Prostate gland (tissue), 2 donors: ENCODE measurements at regions of chr1 and their contacts with region 1.

Region 1: DNA sequence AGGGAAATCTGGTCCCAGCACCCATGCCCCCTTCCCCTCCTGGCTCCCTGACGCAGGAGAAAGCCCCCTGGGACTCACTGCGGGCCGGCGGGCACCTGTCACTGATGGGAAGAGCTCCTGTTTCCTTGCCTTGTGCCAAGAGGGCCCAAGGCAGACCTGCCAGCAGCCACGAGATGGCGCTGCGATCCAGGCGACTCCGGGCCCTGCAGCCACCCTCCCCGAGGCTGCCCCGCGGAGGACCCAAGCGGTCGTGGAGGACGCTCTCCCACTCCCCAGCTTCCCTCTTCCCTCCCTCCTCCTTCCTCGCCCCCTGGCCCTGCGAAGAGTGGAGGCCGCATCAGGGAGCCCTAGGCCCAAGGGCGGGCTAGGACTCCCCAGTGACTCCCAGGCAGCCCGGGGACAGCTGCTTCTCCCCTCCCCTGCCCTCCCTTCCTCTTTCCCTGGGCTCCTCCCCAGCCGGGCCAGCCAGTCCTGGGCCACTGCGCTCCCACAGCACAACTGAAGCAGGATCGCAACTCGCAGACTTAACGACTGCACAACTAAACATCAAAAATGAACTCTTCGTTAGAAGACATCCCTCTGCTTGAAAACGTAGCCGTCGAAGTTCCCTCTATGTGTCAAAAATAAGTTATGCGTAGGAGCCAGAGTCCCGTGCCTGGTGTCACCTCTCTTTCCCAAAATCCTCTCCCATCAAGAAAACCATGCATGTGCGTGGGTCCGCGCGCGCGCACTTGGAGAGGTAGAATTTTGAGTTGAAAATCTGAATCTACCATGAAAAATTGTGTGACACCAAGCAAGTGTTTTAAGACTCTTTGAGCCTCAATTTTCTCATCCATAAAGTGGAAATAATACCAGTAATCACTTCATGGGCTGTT is 34.2 kb downstream of the BATF3 start:
- DNase-seq: peak; percentile 70
- H3K4me3 ChIP-seq: peak overlapping the region; percentile 38 to 56
- H3K27ac ChIP-seq: peak overlapping the region; percentile 65 to 72
- H3K4me1 ChIP-seq: no peaks in the 10 kb centered on the region
- H3K27me3 ChIP-seq: no peaks in the 10 kb centered on the region
- CTCF ChIP-seq: peak; percentile 81 to 98 (median 84)
- POLR2A ChIP-seq: peak; percentile 23

Region 2: DNA sequence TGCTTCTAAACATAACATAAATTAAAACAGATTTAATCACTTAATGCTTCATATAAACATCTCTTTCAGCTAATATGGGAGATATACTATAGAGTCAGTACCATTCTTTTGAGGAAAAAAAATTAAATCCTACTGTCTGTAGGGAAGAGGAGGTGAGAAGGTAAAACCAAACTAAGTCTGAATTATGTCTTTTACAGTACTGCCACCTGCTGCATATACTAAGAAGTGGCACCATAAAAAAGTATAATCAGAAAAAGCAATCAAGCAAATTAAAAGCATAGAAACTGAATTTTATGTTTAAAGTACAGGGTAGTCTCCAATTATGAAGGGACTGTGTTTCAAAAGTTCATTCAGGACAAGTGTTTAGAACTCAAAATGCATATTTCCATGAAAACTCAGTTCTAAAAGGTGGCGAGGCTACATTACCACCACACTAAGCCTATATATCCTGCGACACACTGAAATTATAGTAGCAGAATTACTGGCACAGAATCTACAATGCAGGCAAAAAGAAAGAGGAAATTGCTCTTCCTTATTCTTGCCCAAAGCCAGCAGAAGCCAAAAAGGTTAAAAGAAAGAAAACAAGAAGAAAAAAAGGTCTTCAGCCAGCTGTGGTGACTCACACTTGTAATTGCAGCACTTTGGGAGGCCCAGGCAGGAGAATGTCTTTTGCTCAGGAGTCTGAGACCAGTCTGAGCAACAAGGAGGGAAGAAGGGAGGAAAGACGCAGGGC is 117.1 kb after region 1 on chr1:
- intact Hi-C with region 1: loop called (anchors 5 kb)
- DNase-seq: no peak
- H3K4me3 ChIP-seq: no peak overlapping the region
- H3K27ac ChIP-seq: no peak overlapping the region
- H3K4me1 ChIP-seq: no peaks in the 10 kb centered on the region
- H3K27me3 ChIP-seq: no peaks in the 10 kb centered on the region
- CTCF ChIP-seq: peak in 3 of 4 experiments; percentile 62 to 76 (median 72)
- POLR2A ChIP-seq: no peak

Region 3: DNA sequence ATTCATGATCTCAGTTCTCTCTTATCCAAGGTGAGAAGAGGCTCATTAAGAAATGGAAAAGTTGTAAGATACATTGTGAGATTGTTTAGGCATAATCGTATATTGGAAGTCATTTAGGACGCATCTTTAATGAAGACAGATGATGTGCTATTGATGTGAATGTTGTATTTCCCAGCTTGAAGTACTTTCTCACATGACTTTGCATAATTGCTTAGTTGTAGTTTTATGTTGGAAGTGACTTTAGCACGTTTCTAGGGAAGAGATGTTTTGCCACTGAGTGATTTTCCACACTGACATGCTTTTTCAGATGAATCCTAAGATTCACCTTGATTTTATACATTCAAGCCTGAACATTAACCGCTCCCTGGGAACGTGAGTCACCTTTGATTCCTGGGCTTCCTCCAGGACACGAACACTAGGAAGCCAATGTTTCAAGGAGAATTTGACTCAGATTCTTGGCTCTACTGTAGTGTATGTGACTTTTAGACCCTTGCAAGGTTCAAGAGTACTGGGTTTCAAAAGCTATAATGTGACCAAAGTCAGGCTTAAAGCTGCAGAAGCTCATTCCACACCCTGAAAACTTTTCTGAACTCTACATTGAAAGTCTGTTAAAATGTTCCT is 322.3 kb after region 1 on chr1:
- intact Hi-C with region 1: loop called (anchors 5 kb)
- DNase-seq: no peak
- H3K4me3 ChIP-seq: no peak overlapping the region
- H3K27ac ChIP-seq: no peak overlapping the region
- H3K4me1 ChIP-seq: no peaks in the 10 kb centered on the region
- H3K27me3 ChIP-seq: no peaks in the 10 kb centered on the region
- CTCF ChIP-seq: no peak
- POLR2A ChIP-seq: no peak